ENCODE measurements at regions of chr5 and their contacts with region 1.

Region 1: DNA sequence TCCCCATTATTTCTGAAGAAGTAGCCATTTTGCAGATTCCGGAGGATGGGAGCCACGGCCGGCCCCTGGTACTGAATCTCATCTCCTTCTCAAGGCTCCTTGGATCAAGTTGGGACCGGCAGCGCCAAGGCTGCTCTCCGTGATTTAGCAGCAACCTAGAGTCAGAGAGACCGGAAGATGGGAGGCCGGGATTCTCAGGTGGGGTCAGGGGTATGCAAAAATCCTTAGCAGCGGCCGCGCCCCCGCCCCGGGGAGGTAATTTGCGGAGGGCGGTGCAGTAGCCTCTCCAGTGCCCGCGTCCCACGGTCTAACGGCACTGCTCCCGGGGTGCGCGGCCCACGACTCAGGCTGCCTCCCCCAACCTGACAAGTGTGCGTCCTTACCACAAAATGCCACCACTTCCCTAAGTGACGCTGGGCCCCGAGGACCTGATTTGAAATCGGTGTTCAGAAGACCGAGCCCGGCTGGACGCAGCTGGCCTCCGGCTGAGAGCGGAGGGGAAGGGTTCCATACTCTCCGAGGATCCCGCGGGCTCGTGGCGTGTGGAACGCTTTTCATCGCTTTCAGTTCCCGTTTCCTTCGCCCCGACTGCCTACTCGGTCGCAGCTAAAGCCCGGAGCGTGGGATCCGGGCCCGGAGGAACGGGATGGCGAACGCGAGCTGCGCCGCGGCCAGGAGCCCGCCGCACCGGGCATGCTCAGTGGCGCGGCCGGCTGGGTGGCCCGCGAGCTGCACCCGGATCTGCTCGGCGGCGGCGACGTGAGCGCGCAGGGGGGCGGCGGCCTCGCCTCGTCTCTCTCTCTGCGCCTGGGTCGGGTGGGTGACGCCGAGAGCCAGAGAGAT is at the start of gene SCAMP1:
- DNase-seq: peak; percentile 99
- ATAC-seq: peak; percentile 87
- H3K4me3 Mint-ChIP-seq: peak within 1 kb of the TSS; percentile 95
- H3K27ac Mint-ChIP-seq: peak within 1 kb of the TSS; percentile 96
- H3K4me1 Mint-ChIP-seq: peaks cover 33% of the 10 kb centered on the region
- H3K27me3 Mint-ChIP-seq: no peaks in the 10 kb centered on the region
- CTCF ChIP-seq: no peak
- total RNA-seq, gene SCAMP1: 8.5 and 9.6 TPM in 2 replicates

Region 2: GRCh38 chr5:77852514-77853352 is 507.3 kb before region 1 on chr5:
- CTCF ChIA-PET with region 1: no interaction called
- POLR2A ChIA-PET with region 1: no interaction called
- intact Hi-C with region 1: loop called (anchors 5 kb)
- DNase-seq: peak; percentile 68
- ATAC-seq: peak; percentile 89
- H3K4me3 Mint-ChIP-seq: peak overlapping the region; percentile 81
- H3K27ac Mint-ChIP-seq: peak overlapping the region; percentile 92
- H3K4me1 Mint-ChIP-seq: peaks cover 17% of the 10 kb centered on the region
- H3K27me3 Mint-ChIP-seq: no peaks in the 10 kb centered on the region
- CTCF ChIP-seq: no peak

Region 3: GRCh38 chr5:78109891-78110324 is 250.1 kb before region 1 on chr5:
- CTCF ChIA-PET with region 1: no interaction called
- POLR2A ChIA-PET with region 1: interaction called, 3 read pairs
- intact Hi-C with region 1: loop called (anchors 1 kb)
- DNase-seq: no peak
- ATAC-seq: peak; percentile 76
- H3K4me3 Mint-ChIP-seq: peak overlapping the region; percentile 75
- H3K27ac Mint-ChIP-seq: peak overlapping the region; percentile 87
- H3K4me1 Mint-ChIP-seq: peaks cover 69% of the 10 kb centered on the region
- H3K27me3 Mint-ChIP-seq: no peaks in the 10 kb centered on the region
- CTCF ChIP-seq: no peak

Region 4: GRCh38 chr5:78294248-78295034 is 65.6 kb before region 1 on chr5 and contains the start of gene AP3B1:
- CTCF ChIA-PET with region 1: interaction called, 27 read pairs
- POLR2A ChIA-PET with region 1: interaction called, 167 read pairs
- intact Hi-C with region 1: loop called (anchors 1 kb)
- DNase-seq: peak; percentile 96
- ATAC-seq: peak; percentile 94
- H3K4me3 Mint-ChIP-seq: peak within 1 kb of the TSS; percentile 98
- H3K27ac Mint-ChIP-seq: peak within 1 kb of the TSS; percentile 98
- H3K4me1 Mint-ChIP-seq: peaks cover 44% of the 10 kb centered on the region
- H3K27me3 Mint-ChIP-seq: no peaks in the 10 kb centered on the region
- CTCF ChIP-seq: no peak
- total RNA-seq, gene AP3B1: 46.8 and 52.9 TPM in 2 replicates

Region 5: GRCh38 chr5:78308703-78309102 is 51.3 kb before region 1 on chr5:
- CTCF ChIA-PET with region 1: no interaction called
- POLR2A ChIA-PET with region 1: no interaction called
- intact Hi-C with region 1: no loop called
- DNase-seq: no peak
- ATAC-seq: no peak
- H3K4me3 Mint-ChIP-seq: no peak overlapping the region
- H3K27ac Mint-ChIP-seq: no peak overlapping the region
- H3K4me1 Mint-ChIP-seq: no peaks in the 10 kb centered on the region
- H3K27me3 Mint-ChIP-seq: peaks cover 23% of the 10 kb centered on the region
- CTCF ChIP-seq: no peak

Region 6: GRCh38 chr5:78483809-78484521 is 123.9 kb after region 1 on chr5:
- CTCF ChIA-PET with region 1: no interaction called
- POLR2A ChIA-PET with region 1: no interaction called
- intact Hi-C with region 1: loop called (anchors 5 kb)
- DNase-seq: no peak
- ATAC-seq: peak; percentile 99
- H3K4me3 Mint-ChIP-seq: no peak overlapping the region
- H3K27ac Mint-ChIP-seq: peak overlapping the region; percentile 60
- H3K4me1 Mint-ChIP-seq: peaks cover 20% of the 10 kb centered on the region
- H3K27me3 Mint-ChIP-seq: no peaks in the 10 kb centered on the region
- CTCF ChIP-seq: no peak

Region 7: DNA sequence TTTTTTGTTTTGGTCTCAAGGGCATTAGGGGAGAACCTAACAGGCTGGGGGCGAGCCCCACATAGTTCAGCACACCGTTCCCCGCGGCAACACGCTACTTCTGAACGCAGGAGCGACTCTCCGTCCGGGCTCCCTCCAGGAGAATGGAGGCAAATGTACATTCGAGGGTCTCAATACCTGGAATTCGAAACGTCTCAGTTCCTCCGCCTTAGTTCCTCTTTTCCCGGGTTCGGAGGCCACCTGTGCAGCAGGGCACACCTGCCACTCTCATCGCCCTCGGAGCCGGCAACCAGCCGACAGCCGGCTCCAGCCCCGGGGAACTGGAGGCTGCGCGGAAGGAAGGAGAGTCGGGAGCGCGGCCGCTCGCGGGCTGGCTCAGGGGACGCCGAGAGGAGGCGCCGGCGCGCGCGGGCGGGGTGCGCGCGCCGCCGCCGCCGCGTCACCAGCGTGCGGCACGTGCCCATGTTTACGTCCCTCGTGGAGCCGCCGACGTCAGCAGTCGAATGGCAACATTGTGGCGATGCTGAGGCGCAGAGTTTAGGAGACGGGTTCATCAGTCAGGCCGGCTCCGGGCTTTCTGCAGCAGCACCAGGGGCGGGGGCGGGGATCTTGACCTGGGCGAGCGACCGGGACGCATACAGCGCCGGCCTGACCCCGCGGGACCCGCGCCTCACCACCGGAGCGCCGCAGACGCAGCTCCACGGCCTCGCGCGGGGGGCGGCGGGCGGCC is 875.7 kb after region 1 on chr5 and contains the start of gene JMY:
- CTCF ChIA-PET with region 1: no interaction called
- POLR2A ChIA-PET with region 1: no interaction called
- intact Hi-C with region 1: loop called (anchors 1 kb)
- DNase-seq: peak; percentile 68
- ATAC-seq: peak; percentile 79
- H3K4me3 Mint-ChIP-seq: peak within 1 kb of the TSS; percentile 91
- H3K27ac Mint-ChIP-seq: peak within 1 kb of the TSS; percentile 94
- H3K4me1 Mint-ChIP-seq: peaks cover 34% of the 10 kb centered on the region
- H3K27me3 Mint-ChIP-seq: no peaks in the 10 kb centered on the region
- CTCF ChIP-seq: no peak
- total RNA-seq, gene JMY: 6.4 and 6.9 TPM in 2 replicates

Measured in activated B cell treated with CpG ODN at 0.5 μM for 24 hours (primary cell).